ENCODE measurements at regions of chr1 and their contacts with region 1.

Region 1: GRCh38 chr1:198669023-198669698 is 30.3 kb downstream of the PTPRC start:
- DNase-seq: peak in 2 of 10 donors; percentile 41 to 59
- ATAC-seq: peak; percentile 68 to 70
- H3K4me3 Mint-ChIP-seq: peak overlapping the region; percentile 31 to 78 (median 70)
- H3K27ac Mint-ChIP-seq: peak overlapping the region; percentile 89 to 99 (median 94)
- H3K4me1 Mint-ChIP-seq: peaks cover 46 to 92% (median 83%) of the 10 kb centered on the region in 4 donors
- H3K27me3 Mint-ChIP-seq: no peaks in the 10 kb centered on the region

Region 2: GRCh38 chr1:198529414-198529813 is 139.7 kb before region 1 on chr1:
- POLR2A ChIA-PET with region 1: no interaction called
- DNase-seq: no peak
- ATAC-seq: no peak
- H3K4me3 Mint-ChIP-seq: peak overlapping the region in 3 of 10 donors; percentile 12 to 23 (median 12)
- H3K27ac Mint-ChIP-seq: peak overlapping the region in 3 of 10 donors; percentile 7 to 57 (median 28)
- H3K4me1 Mint-ChIP-seq: peaks cover 38 to 74% (median 71%) of the 10 kb centered on the region in 4 donors
- H3K27me3 Mint-ChIP-seq: no peaks in the 10 kb centered on the region

Region 3: DNA sequence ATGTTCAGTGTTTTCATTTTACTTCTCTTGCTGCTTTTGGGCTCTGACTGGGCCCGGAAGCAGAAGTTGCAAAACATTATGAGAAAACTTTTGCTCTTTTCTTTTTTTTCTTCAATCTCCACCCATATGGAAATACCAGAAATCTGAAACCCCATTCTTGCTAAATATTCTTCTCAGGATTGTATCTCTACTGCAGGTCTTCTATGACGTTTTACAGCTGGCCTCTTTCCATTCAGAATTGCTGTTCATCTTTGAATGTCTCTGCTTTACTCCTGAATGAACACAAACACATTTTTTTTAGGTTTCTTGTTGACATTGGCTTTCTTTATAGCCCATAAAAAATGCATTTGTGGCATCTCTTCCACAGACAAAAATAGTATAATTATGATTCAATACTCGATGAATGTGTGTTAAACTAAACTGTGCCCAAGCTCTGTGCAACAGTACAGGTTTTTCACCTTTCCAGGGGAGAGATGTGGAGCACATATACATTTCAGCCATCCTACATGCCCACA is 11.6 kb before region 1 on chr1:
- POLR2A ChIA-PET with region 1: interaction called, 12 read pairs
- DNase-seq: peak in 6 of 10 donors; percentile 24 to 72 (median 49)
- ATAC-seq: peak; percentile 30 to 59
- H3K4me3 Mint-ChIP-seq: peak overlapping the region; percentile 61 to 85 (median 79)
- H3K27ac Mint-ChIP-seq: peak overlapping the region; percentile 83 to 99 (median 97)
- H3K4me1 Mint-ChIP-seq: peaks cover 29 to 79% (median 56%) of the 10 kb centered on the region in 4 donors
- H3K27me3 Mint-ChIP-seq: no peaks in the 10 kb centered on the region

Measured in naive thymus-derived CD8-positive, alpha-beta T cell (primary cell).